ENCODE measurements at regions of chr1 and their contacts with region 1.

Region 1: DNA sequence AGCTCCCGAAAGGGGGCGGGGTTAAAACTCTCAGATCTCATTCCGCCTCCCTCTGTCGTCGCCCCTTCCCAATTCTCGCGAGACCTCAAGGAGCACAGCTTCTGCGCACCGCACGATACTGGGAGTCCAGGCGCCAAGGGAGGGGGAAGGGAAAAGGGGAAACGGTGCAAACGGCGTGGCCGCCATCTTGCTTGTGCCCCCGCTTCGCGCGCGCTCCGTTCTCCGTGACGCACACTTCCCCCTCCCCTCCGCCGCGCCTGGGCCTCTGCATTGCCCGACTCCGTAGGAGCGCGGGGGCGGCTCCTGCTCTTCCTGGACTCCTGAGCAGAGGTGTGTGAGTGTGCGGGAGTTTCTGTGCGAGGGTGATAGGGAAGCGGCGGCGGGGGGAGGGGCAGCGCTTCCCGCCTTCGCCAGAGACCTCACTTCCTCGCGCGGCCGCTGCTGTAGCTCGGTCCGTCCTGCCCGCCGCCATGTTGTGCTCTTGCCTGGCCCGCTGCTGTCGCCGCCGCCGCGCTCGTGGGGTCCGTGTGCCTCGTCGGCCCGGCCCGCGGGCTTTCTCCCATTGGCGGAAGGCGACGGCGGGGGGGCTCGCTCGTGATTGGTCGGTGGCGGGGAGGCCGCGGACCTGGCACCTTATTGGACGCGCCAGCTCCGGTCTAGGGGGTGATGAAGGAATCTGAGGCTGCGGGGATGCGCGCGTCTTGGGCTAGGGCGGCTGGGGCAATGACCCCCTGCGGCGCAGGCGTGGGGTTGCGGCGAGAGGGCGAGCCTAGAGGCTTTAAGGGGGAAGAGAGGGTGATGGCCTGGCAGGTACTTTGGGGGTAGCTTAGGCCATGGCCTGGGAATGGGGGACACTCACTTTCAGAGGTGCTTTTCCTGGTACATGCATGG is at the start of gene NFYC:
- H3K4me3 ChIP-seq: peak within 1 kb of the TSS; percentile 97
- H3K27ac ChIP-seq: peak within 1 kb of the TSS; percentile 95
- H3K4me1 ChIP-seq: peaks cover 11% of the 10 kb centered on the region; the same call in 1 of the 2 replicates
- CTCF ChIP-seq: peak; percentile 26; the same call in 1 of the 2 replicates

Region 2: DNA sequence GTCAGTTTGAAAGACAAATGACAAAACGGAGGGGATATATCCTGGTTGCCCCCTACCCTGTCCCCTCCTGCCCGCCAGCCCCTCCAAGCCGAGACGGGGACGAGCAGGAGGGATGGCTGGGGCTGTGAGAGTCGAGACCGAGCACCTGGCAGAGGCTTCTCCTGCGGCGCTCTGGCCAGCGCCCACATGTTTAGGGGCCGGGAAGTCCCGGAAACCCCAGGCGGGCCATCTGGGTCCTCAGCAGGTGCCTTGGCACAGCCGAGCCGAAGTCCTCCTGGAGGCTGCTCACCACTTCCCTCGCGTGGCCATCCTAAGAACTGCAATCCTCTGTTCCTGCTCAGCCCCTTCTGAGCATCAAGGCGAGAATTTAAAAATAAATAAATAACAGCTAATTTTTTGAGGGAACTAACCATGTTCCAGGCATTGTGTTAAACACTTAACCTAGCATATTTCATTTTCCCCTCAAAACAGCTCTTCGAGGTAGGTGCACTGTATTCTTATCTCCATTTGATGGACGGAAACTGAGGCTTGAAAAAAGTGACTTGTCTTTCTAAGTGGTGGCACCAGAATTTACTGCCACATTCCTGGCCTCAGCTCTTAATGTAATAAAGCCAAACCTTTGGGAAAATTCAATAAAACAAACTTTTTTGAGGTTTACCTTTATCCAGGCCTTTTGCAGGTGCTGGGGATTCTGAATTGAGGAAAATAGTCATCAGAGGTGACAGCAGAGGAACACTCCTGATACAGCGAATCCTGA is 22.8 kb before region 1 on chr1:
- CTCF ChIA-PET with region 1: interaction called, 18 read pairs
- POLR2A ChIA-PET with region 1: interaction called, 6 read pairs
- H3K4me3 ChIP-seq: peak overlapping the region; percentile 27
- H3K27ac ChIP-seq: no peak overlapping the region
- H3K4me1 ChIP-seq: no peaks in the 10 kb centered on the region
- CTCF ChIP-seq: peak; percentile 54

Region 3: GRCh38 chr1:40709100-40709801 is 17.5 kb after region 1 on chr1:
- CTCF ChIA-PET with region 1: interaction called, 4 read pairs
- POLR2A ChIA-PET with region 1: interaction called, 42 read pairs
- H3K4me3 ChIP-seq: peak overlapping the region; percentile 74
- H3K27ac ChIP-seq: peak overlapping the region; percentile 10; the same call in 1 of the 2 replicates
- H3K4me1 ChIP-seq: peaks cover 20% of the 10 kb centered on the region
- CTCF ChIP-seq: no peak

Region 4: GRCh38 chr1:40763742-40764532 is 72.2 kb after region 1 on chr1:
- CTCF ChIA-PET with region 1: interaction called, 3 read pairs
- POLR2A ChIA-PET with region 1: interaction called, 19 read pairs
- H3K4me3 ChIP-seq: no peak overlapping the region
- H3K27ac ChIP-seq: no peak overlapping the region
- H3K4me1 ChIP-seq: no peaks in the 10 kb centered on the region
- CTCF ChIP-seq: no peak

Region 5: GRCh38 chr1:41226815-41227434 is 535.1 kb after region 1 on chr1:
- CTCF ChIA-PET with region 1: no interaction called
- POLR2A ChIA-PET with region 1: no interaction called
- H3K4me3 ChIP-seq: no peak overlapping the region
- H3K27ac ChIP-seq: no peak overlapping the region
- H3K4me1 ChIP-seq: peaks cover 8% of the 10 kb centered on the region; the same call in 1 of the 2 replicates
- CTCF ChIP-seq: no peak